ENCODE measurements at regions of chr1 and their contacts with region 1.

Region 1: GRCh38 chr1:94854458-94855306 is 34.5 kb downstream of the SLC44A3 start:
- DNase-seq: peak; percentile 64 to 97 (median 82)

Region 2: DNA sequence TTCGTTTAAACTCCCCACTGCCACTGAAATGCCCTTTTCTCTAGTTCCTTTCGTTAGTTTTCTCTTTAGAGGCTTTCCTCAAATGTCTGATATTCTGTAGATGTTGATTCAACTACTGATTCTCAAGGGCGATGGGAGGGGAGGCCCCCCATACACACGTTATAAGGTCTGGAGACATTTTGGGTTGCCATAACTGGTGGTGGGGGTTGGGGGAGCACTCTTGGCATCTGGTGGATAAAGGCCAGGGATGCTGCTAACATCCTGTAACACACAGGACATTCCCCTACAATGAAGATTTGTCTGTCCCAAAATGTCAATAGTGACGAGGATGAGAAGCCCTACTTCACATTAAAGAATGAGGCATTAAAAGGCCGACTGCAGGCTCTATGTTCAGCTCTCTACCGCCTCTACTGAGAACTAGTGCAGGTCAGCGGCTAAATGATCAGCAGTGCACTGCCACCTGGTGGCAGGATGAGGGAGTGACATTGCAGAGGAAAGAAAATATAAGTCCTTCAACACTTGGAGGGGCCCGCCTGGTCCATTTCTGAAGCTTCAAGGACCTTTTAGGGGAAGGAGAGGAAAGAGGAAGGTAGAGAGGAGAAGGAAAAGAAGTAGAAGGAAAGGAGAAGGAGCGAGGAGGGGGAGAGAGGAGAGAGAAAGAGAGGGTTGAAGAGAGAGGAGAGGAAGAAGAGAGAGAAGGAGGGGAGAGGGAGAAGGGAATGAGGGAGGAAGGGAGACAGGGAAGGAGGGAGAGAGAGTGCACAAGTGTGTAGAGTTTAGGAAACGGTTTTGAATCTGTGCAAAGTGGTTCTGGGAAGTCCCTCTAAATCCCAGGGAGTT is 188.7 kb after region 1 on chr1:
- intact Hi-C with region 1: loop called (anchors 1 kb)
- DNase-seq: peak; percentile 66 to 97 (median 83)